ENCODE measurements at regions of chr4 and their contacts with region 1.

Region 1: GRCh38 chr4:56129431-56129861 is 180.7 kb downstream of the CEP135 start:
- DNase-seq: peak; percentile 79
- ATAC-seq: peak; percentile 99
- H3K4me3 ChIP-seq: no peak overlapping the region
- H3K27ac ChIP-seq: peak overlapping the region; percentile 37; the same call in 1 of the 2 replicates
- H3K4me1 ChIP-seq: peaks cover 13 to 26% of the 10 kb centered on the region in 2 experiments
- H3K27me3 ChIP-seq: no peaks in the 10 kb centered on the region
- CTCF ChIP-seq: peak; percentile 86 to 91 (median 90)
- POLR2A ChIP-seq: no peak
- RAD21 ChIP-seq: peak; percentile 89

Region 2: GRCh38 chr4:55965585-55965984 is 163.9 kb before region 1 on chr4:
- CTCF ChIA-PET with region 1: no interaction called
- POLR2A ChIA-PET with region 1: no interaction called
- RAD21 ChIA-PET with region 1: no interaction called
- intact Hi-C with region 1: loop called (anchors 10 kb)
- DNase-seq: no peak
- ATAC-seq: no peak
- H3K4me3 ChIP-seq: no peak overlapping the region
- H3K27ac ChIP-seq: no peak overlapping the region
- H3K4me1 ChIP-seq: peaks cover 0 to 3% of the 10 kb centered on the region in 2 experiments; a peak in 1 of 4 replicates
- H3K27me3 ChIP-seq: no peaks in the 10 kb centered on the region
- CTCF ChIP-seq: no peak
- POLR2A ChIP-seq: no peak
- RAD21 ChIP-seq: no peak

Region 3: DNA sequence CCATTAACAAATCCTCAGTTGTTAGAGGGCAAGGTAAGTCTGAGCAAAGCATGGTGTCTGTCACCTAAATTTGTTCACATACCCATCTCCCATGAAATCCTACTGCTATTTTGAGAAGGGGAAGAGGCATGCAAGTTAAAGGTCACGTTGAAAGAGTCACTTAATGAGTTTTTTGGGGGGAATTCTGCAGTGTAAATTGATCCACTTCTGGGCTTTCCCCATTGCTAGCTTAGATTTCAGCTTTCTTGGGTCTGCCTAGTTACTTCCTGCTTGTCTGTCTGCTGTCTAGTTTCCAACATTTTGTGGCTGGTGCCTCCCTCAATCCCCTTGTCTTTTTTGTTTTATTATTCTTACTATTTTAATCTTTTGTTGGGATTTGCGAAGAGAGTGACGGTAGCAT is 148.7 kb before region 1 on chr4:
- CTCF ChIA-PET with region 1: no interaction called
- POLR2A ChIA-PET with region 1: no interaction called
- RAD21 ChIA-PET with region 1: no interaction called
- intact Hi-C with region 1: no loop called
- DNase-seq: no peak
- ATAC-seq: no peak
- H3K4me3 ChIP-seq: no peak overlapping the region
- H3K27ac ChIP-seq: no peak overlapping the region
- H3K4me1 ChIP-seq: no peaks in the 10 kb centered on the region
- H3K27me3 ChIP-seq: no peaks in the 10 kb centered on the region
- CTCF ChIP-seq: no peak
- POLR2A ChIP-seq: no peak
- RAD21 ChIP-seq: no peak